ENCODE measurements at regions of chr4 and their contacts with region 1.

Region 1: GRCh38 chr4:30256080-30256832 is 463.9 kb upstream of the PCDH7 start:
- DNase-seq: no peak
- ATAC-seq: no peak

Region 2: GRCh38 chr4:30330894-30331652 is 74.8 kb after region 1 on chr4:
- intact Hi-C with region 1: no loop called
- DNase-seq: no peak
- ATAC-seq: no peak

Region 3: DNA sequence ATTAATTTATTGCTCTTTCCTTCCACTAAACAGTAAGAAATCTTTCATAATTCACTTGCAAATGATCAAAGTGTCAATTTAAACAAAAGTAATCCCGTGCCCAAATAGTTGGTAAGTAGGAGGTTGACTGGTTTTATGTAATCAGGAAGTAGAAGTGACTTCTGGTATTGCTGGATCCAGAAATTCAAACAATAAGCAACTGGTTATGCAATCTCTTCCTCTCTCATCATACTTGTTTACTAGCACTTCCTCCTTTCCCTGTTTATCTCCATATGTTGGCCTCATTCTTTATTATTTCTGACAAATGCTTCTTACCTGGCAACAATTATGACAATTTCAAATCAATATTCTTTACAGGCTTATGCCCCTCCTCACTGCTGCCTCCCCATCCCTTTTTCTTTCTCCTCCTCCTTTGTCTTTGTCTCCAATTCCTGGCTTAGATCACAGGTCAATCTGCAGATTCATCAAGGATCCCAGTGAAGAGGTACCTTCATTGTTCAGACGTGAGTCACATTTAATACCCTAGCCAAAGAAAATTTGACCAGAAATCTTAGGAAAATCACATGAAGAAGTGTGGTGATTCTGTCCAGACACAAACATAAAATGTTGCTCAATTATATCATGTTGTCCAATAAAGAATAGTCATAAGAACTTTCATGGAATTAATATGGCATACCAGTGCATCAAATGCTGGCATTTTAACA is 140.7 kb after region 1 on chr4:
- intact Hi-C with region 1: loop called in 1 of 2 experiments (anchors 5 kb)
- DNase-seq: no peak
- ATAC-seq: no peak